Endothelial cell of umbilical vein (primary cell): ENCODE measurements at regions of chr7 and their contacts with region 1.

Region 1: GRCh38 chr7:100101016-100101862 is at the starts of genes AP4M1 and MCM7:
- DNase-seq: peak; percentile 98
- H3K4me3 ChIP-seq: peak within 1 kb of the TSS; percentile 74 to 96 (median 75)
- H3K27ac ChIP-seq: peak within 1 kb of the TSS; percentile 84
- H3K4me1 ChIP-seq: peaks cover 18% of the 10 kb centered on the region
- H3K27me3 ChIP-seq: no peaks in the 10 kb centered on the region
- CTCF ChIP-seq: no peak
- POLR2A ChIP-seq: peak; percentile 38
- total RNA-seq, gene AP4M1: 20.5 and 22.7 TPM in 2 replicates
- total RNA-seq, gene MCM7: 183 and 187 TPM in 2 replicates

Region 2: GRCh38 chr7:99975782-99976521 is 125.3 kb before region 1 on chr7 and contains the start of gene AZGP1:
- CTCF ChIA-PET with region 1: no interaction called
- POLR2A ChIA-PET with region 1: no interaction called
- dilution Hi-C with region 1: no loop called
- intact Hi-C with region 1: no loop called
- DNase-seq: no peak
- H3K4me3 ChIP-seq: no peak within 1 kb of the TSS
- H3K27ac ChIP-seq: no peak within 1 kb of the TSS
- H3K4me1 ChIP-seq: no peaks in the 10 kb centered on the region
- H3K27me3 ChIP-seq: peaks cover 0 to 5% of the 10 kb centered on the region in 2 experiments
- CTCF ChIP-seq: no peak
- POLR2A ChIP-seq: no peak
- total RNA-seq, gene AZGP1: not detected in 2 replicates

Region 3: DNA sequence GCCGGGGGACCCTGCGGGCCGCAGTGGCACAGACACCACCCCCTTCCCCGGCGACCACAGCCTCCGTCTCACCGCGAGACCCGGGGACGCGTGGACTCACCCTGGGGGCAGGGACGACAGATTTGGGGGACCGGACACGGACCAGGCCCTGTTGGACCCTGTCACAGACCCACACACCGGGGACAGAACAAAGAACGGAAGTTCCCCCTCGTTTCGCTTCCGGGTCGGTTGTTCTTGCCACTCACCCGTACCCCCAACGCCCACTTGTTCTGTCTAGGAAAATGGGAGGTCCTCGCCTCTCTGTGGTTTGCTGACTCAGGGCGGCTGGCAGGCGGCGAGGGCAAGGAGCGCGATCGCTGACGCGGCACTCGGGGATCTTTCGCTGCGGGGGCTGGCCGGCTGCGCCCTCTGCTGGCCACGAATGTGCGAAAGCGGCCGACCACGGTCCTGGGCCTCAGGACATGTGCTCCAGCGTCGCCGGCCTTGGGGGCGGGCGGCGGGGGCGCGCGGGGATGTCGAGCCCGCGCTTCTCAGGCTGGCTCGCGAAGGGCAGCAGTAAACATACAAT is 19.6 kb before region 1 on chr7 and contains the start of gene ZNF3:
- CTCF ChIA-PET with region 1: interaction called, 18 read pairs
- POLR2A ChIA-PET with region 1: interaction called, 15 read pairs
- dilution Hi-C with region 1: no loop called
- intact Hi-C with region 1: loop called (anchors 1 kb)
- DNase-seq: peak; percentile 100
- H3K4me3 ChIP-seq: peak within 1 kb of the TSS; percentile 85 to 92 (median 89)
- H3K27ac ChIP-seq: peak within 1 kb of the TSS; percentile 78
- H3K4me1 ChIP-seq: peaks cover 19% of the 10 kb centered on the region
- H3K27me3 ChIP-seq: no peaks in the 10 kb centered on the region
- CTCF ChIP-seq: peak; percentile 96 to 98
- POLR2A ChIP-seq: peak; percentile 86
- total RNA-seq, gene ZNF3: 30.9 and 31.1 TPM in 2 replicates

Region 4: GRCh38 chr7:100119062-100119700 is 17.9 kb after region 1 on chr7 and contains the starts of genes CNPY4 and TAF6:
- CTCF ChIA-PET with region 1: interaction called, 3 read pairs
- POLR2A ChIA-PET with region 1: no interaction called
- dilution Hi-C with region 1: no loop called
- intact Hi-C with region 1: loop called (anchors 1 kb)
- DNase-seq: peak; percentile 96
- H3K4me3 ChIP-seq: peak within 1 kb of the TSS; percentile 70 to 89 (median 77)
- H3K27ac ChIP-seq: peak within 1 kb of the TSS; percentile 83
- H3K4me1 ChIP-seq: peaks cover 11% of the 10 kb centered on the region
- H3K27me3 ChIP-seq: no peaks in the 10 kb centered on the region
- CTCF ChIP-seq: no peak
- POLR2A ChIP-seq: peak; percentile 86
- total RNA-seq, gene CNPY4: 18.0 and 33.7 TPM in 2 replicates
- total RNA-seq, gene TAF6: 64.6 and 67.3 TPM in 2 replicates

Region 5: GRCh38 chr7:100158229-100159098 is 57.2 kb after region 1 on chr7 and contains the start of gene TRAPPC14:
- CTCF ChIA-PET with region 1: no interaction called
- POLR2A ChIA-PET with region 1: no interaction called
- dilution Hi-C with region 1: no loop called
- intact Hi-C with region 1: loop called (anchors 2 kb)
- DNase-seq: peak; percentile 83
- H3K4me3 ChIP-seq: peak within 1 kb of the TSS; percentile 56 to 86 (median 66)
- H3K27ac ChIP-seq: peak within 1 kb of the TSS; percentile 32
- H3K4me1 ChIP-seq: peaks cover 14% of the 10 kb centered on the region
- H3K27me3 ChIP-seq: no peaks in the 10 kb centered on the region
- CTCF ChIP-seq: no peak
- POLR2A ChIP-seq: peak; percentile 77
- total RNA-seq, gene TRAPPC14: 23.0 and 24.0 TPM in 2 replicates

Region 6: DNA sequence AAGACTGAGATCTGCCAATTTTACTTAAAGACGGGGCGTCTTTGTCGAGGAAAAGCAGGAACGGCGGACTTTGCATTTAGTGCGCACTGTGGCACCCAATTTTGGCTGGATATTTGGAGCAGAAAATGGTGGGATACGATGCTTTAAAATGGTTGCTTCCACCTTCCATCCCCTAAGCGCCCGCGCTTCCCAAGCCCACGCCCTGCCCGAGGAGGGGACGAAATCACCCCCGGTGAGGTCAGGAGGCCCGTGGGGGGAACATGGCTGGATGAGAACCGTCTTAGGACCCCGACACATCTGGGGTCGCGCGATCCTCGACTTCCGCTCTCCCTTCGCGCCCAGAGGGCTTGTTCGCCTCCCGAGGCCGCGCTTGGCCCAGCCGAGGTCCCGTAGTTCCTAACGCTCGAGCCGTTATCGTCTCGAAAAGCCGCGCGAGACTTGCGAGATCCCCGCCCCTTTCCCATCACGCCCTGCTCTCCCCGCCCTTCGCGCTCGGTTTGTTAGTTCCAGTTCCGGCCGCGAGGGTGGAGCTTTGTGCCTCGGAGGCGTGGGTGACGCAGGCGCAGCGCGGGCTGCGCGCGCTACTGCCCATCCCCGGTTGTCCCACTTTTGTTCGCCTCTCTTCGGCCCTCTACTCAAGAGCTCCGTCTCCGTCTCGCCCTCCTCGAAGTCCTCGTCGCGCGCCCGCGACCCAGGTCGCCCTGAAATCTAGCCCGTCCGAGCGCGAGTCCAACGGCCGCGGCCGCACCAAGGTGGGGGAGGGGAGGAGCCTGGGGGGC is 773.5 kb after region 1 on chr7 and contains the start of gene SRRT:
- CTCF ChIA-PET with region 1: no interaction called
- POLR2A ChIA-PET with region 1: no interaction called
- dilution Hi-C with region 1: no loop called
- intact Hi-C with region 1: no loop called
- DNase-seq: peak; percentile 97
- H3K4me3 ChIP-seq: peak within 1 kb of the TSS; percentile 72 to 84 (median 79)
- H3K27ac ChIP-seq: peak within 1 kb of the TSS; percentile 89
- H3K4me1 ChIP-seq: peaks cover 19% of the 10 kb centered on the region
- H3K27me3 ChIP-seq: no peaks in the 10 kb centered on the region
- CTCF ChIP-seq: peak in 1 of 2 donors; percentile 31
- POLR2A ChIP-seq: peak; percentile 91
- total RNA-seq, gene SRRT: 199 and 202 TPM in 2 replicates

Region 7: DNA sequence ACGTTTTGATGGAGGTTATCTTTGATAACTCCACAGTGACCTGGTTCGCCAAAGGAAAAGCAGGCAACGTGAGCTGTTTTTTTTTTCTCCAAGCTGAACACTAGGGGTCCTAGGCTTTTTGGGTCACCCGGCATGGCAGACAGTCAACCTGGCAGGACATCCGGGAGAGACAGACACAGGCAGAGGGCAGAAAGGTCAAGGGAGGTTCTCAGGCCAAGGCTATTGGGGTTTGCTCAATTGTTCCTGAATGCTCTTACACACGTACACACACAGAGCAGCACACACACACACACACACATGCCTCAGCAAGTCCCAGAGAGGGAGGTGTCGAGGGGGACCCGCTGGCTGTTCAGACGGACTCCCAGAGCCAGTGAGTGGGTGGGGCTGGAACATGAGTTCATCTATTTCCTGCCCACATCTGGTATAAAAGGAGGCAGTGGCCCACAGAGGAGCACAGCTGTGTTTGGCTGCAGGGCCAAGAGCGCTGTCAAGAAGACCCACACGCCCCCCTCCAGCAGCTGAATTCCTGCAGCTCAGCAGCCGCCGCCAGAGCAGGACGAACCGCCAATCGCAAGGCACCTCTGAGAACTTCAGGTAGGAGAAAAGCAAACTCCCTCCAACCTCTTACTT is 1025.5 kb after region 1 on chr7 and contains the start of gene SERPINE1:
- CTCF ChIA-PET with region 1: no interaction called
- POLR2A ChIA-PET with region 1: no interaction called
- dilution Hi-C with region 1: no loop called
- intact Hi-C with region 1: loop called (anchors 10 kb)
- DNase-seq: peak; percentile 98
- H3K4me3 ChIP-seq: peak within 1 kb of the TSS; percentile 87 to 98 (median 88)
- H3K27ac ChIP-seq: peak within 1 kb of the TSS; percentile 83
- H3K4me1 ChIP-seq: peaks cover 57% of the 10 kb centered on the region
- H3K27me3 ChIP-seq: no peaks in the 10 kb centered on the region
- CTCF ChIP-seq: peak; percentile 24 to 26
- POLR2A ChIP-seq: peak; percentile 100
- total RNA-seq, gene SERPINE1: 2,296 and 2,645 TPM in 2 replicates